ENCODE measurements at regions of chr5 and their contacts with region 1.

Region 1: DNA sequence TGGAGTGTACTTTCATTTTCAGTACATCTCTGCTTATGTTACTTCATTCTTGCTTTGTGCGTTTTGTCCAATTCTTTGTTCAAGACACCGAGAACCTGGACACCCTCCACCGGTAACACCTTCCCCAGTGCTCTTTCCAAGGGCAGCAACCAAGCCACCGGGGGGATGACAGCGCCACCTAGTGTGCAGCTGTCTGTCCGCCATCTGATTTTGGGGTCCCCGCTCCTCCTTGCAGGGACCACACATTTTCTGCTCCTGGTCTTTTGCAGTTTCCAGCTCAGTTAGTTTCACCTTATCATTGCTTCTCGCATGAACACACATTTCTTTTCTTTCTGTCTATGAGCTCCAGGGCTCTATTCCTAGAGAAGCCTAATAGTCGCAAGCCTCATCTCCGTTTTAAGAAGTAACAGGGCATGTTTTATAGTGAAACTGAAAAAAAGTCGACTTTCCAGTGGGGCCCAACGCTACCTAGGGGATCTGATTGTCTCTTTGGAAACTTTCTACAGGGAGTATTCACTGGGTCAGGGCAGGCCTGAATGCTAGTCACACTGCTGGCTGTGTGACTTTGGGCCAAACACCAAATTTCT is 152.1 kb downstream of the FSTL4 start:
- DNase-seq: peak; percentile 72
- H3K4me3 Mint-ChIP-seq: no peak overlapping the region
- H3K27ac Mint-ChIP-seq: no peak overlapping the region
- H3K4me1 Mint-ChIP-seq: peaks cover 2% of the 10 kb centered on the region
- H3K27me3 Mint-ChIP-seq: no peaks in the 10 kb centered on the region

Region 2: GRCh38 chr5:133265720-133266526 is 194.3 kb before region 1 on chr5:
- CTCF ChIA-PET with region 1: no interaction called
- intact Hi-C with region 1: no loop called
- DNase-seq: no peak
- H3K4me3 Mint-ChIP-seq: no peak overlapping the region
- H3K27ac Mint-ChIP-seq: no peak overlapping the region
- H3K4me1 Mint-ChIP-seq: no peaks in the 10 kb centered on the region
- H3K27me3 Mint-ChIP-seq: no peaks in the 10 kb centered on the region

Region 3: DNA sequence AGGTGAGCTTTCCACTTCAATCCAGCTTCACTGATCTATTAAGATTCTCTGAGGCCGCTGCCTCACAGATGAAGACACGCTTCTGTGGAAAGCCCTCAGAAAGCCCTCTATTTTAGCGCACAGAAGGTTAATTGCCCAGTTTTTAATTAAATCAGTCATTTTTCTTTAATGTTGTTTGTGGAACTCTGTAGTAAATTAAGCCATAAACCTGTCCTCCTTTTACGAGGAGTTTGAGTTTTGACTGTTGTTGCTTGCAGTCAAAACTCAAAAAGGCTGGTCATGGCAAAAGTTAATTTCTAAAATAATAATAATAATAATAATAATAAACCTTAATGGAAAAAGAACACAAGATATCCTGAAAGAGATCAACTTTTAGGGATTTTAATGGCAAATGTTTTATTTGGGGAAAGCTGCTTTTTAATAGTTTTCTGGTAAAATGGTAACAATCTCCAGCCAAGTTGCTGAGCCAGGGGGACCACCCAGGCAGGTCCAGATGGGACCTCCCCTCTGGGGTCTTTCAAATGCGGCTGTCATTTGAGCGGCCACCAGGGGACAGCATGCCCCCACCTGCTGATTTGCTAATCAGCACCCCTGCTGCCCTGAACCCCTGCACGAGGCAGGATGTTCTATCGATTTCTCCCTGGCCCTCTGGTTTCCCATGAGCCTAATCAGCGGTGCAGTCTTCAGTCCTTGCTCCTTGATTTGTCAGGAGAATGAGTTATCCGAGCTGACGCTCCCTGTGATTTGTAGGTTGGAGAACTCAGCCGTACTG is 95.1 kb before region 1 on chr5:
- CTCF ChIA-PET with region 1: no interaction called
- intact Hi-C with region 1: loop called (anchors 1 kb)
- DNase-seq: peak; percentile 31
- H3K4me3 Mint-ChIP-seq: no peak overlapping the region
- H3K27ac Mint-ChIP-seq: no peak overlapping the region
- H3K4me1 Mint-ChIP-seq: no peaks in the 10 kb centered on the region
- H3K27me3 Mint-ChIP-seq: peaks cover 4% of the 10 kb centered on the region

Region 4: GRCh38 chr5:133423618-133424282 is 36.5 kb before region 1 on chr5:
- CTCF ChIA-PET with region 1: interaction called, 8 read pairs
- intact Hi-C with region 1: loop called (anchors 5 kb)
- DNase-seq: peak; percentile 79
- H3K4me3 Mint-ChIP-seq: no peak overlapping the region
- H3K27ac Mint-ChIP-seq: no peak overlapping the region
- H3K4me1 Mint-ChIP-seq: peaks cover 10% of the 10 kb centered on the region
- H3K27me3 Mint-ChIP-seq: no peaks in the 10 kb centered on the region